Gastrocnemius medialis (tissue), 4 donors: ENCODE measurements at regions of chr1 and their contacts with region 1.

Region 1: GRCh38 chr1:115337633-115338456 is at the start of gene NGF:
- DNase-seq: no peak
- ATAC-seq: peak; percentile 28 to 35
- H3K4me3 ChIP-seq: peak within 1 kb of the TSS; percentile 45 to 59 (median 51)
- H3K27ac ChIP-seq: peak within 1 kb of the TSS; percentile 33 to 60 (median 45)
- H3K4me1 ChIP-seq: no peaks in the 10 kb centered on the region
- H3K27me3 ChIP-seq: peaks cover 0 to 13% (median 5%) of the 10 kb centered on the region in 3 donors
- CTCF ChIP-seq: no peak
- POLR2A ChIP-seq: peak in 1 of 2 donors; percentile 11
- total RNA-seq, gene NGF: 0.78 TPM in 1 of 4 donors, not detected in the others

Region 2: GRCh38 chr1:115251856-115252255 is 86.0 kb before region 1 on chr1:
- in situ Hi-C with region 1: no loop called
- intact Hi-C with region 1: no loop called
- DNase-seq: no peak
- ATAC-seq: no peak
- H3K4me3 ChIP-seq: no peak overlapping the region
- H3K27ac ChIP-seq: no peak overlapping the region
- H3K4me1 ChIP-seq: no peaks in the 10 kb centered on the region
- H3K27me3 ChIP-seq: no peaks in the 10 kb centered on the region
- CTCF ChIP-seq: no peak
- POLR2A ChIP-seq: no peak

Region 3: DNA sequence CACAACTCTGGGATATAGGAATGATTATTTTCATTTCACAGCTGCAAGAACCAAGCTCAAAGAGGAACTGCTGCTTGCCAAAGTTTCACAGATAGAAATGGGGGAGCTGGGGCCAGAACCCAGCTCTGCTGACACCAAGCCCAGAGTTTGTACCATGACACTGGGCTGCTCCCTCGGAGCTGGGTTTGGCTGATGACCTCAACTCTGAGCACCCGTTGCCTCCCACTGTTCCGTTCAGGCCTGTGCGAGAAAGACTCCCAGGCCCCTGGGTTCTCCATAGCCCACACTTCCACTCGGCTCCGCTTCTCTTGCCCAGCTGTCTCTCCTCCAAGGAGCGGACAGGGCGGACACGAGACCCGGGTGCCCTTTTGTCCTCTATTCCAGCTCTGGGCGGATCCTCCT is 55.0 kb before region 1 on chr1:
- in situ Hi-C with region 1: loop called in 1 of 4 experiments (anchors 10 kb)
- intact Hi-C with region 1: no loop called
- DNase-seq: peak; percentile 36 to 46
- ATAC-seq: peak; percentile 39 to 64
- H3K4me3 ChIP-seq: no peak overlapping the region
- H3K27ac ChIP-seq: peak overlapping the region; percentile 65 to 74 (median 70)
- H3K4me1 ChIP-seq: peaks cover 0 to 5% of the 10 kb centered on the region in 2 donors
- H3K27me3 ChIP-seq: no peaks in the 10 kb centered on the region
- CTCF ChIP-seq: no peak
- POLR2A ChIP-seq: no peak

Region 4: GRCh38 chr1:115430441-115431116 is 92.7 kb after region 1 on chr1:
- in situ Hi-C with region 1: no loop called
- intact Hi-C with region 1: loop called (anchors 10 kb)
- DNase-seq: no peak
- ATAC-seq: no peak
- H3K4me3 ChIP-seq: no peak overlapping the region
- H3K27ac ChIP-seq: no peak overlapping the region
- H3K4me1 ChIP-seq: no peaks in the 10 kb centered on the region
- H3K27me3 ChIP-seq: no peaks in the 10 kb centered on the region
- CTCF ChIP-seq: no peak
- POLR2A ChIP-seq: no peak